Esophagus muscularis mucosa (tissue), 4 donors: ENCODE measurements at regions of chr3 and their contacts with region 1.

Region 1: DNA sequence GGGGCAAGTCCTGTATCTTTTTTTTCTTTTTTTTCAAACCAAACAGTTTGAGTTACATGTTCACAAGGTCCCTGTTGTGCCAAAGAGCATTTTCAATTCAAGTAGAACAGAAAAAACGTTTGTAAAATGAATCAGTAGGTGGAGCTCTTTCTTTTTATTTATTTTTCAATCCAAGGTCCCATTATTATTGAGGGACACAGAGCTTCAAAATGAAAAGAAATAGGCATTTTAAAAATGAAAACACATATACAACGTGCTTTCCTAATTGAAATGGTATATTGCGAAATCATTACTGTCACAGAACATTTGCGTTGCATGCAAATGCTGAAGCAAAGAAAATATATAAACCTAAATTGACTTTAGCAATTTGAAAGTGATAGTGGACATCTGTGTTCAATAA is 711.0 kb downstream of the MECOM start:
- DNase-seq: no peak
- H3K4me3 ChIP-seq: peak overlapping the region; percentile 10 to 36 (median 18)
- H3K27ac ChIP-seq: no peak overlapping the region
- H3K4me1 ChIP-seq: peaks cover 0 to 8% (median 3%) of the 10 kb centered on the region in 4 donors
- H3K27me3 ChIP-seq: no peaks in the 10 kb centered on the region
- CTCF ChIP-seq: peak; percentile 29 to 42 (median 30)
- EP300 ChIP-seq: no peak
- POLR2A ChIP-seq: no peak

Region 2: DNA sequence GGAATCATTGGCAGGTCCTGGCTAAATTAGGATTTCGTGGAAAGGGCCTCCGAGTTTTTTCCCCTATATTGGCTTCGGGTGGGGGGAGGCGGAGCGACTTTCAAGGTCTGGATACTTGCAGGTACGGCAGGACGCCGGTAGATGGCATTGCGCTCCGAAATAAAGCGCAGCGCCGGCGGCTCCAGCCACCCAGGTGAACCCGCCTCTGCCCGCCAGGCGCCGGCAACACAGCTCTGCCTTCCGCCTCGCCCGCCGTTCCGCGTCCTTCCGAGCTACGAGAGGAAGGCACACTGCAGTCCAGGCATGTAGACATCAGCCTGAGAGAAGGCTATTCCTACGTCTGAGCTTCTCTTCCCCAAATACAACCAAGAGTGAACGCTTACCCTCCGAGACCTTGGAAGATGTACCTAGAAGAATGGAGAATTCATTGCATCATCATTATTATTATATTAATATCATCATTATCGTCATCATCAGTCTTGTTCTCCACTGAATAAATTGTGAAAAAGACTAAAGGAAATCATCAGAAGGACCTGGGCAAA is 196.9 kb after region 1 on chr3:
- intact Hi-C with region 1: loop called (anchors 10 kb)
- DNase-seq: no peak
- H3K4me3 ChIP-seq: peak overlapping the region; percentile 17 to 49 (median 30)
- H3K27ac ChIP-seq: peak overlapping the region; percentile 47 to 58 (median 52)
- H3K4me1 ChIP-seq: peaks cover 5 to 36% (median 32%) of the 10 kb centered on the region in 4 donors
- H3K27me3 ChIP-seq: peaks cover 0 to 58% (median 23%) of the 10 kb centered on the region in 4 donors
- CTCF ChIP-seq: peak; percentile 86 to 91 (median 88)
- EP300 ChIP-seq: no peak
- POLR2A ChIP-seq: no peak